HCT116 (cell line): ENCODE measurements at regions of chr2 and their contacts with region 1.

Region 1: GRCh38 chr2:169877398-169877797 is 50.1 kb downstream of the UBR3 start:
- DNase-seq: peak; percentile 10
- ATAC-seq: no peak
- H3K4me3 ChIP-seq: no peak overlapping the region
- H3K27ac ChIP-seq: no peak overlapping the region
- H3K4me1 ChIP-seq: no peaks in the 10 kb centered on the region
- H3K27me3 ChIP-seq: no peaks in the 10 kb centered on the region
- CTCF ChIP-seq: peak in 1 of 3 experiments; percentile 43; a peak in 2 of 6 replicates
- POLR2A ChIP-seq: no peak
- RAD21 ChIP-seq: peak; percentile 54

Region 2: DNA sequence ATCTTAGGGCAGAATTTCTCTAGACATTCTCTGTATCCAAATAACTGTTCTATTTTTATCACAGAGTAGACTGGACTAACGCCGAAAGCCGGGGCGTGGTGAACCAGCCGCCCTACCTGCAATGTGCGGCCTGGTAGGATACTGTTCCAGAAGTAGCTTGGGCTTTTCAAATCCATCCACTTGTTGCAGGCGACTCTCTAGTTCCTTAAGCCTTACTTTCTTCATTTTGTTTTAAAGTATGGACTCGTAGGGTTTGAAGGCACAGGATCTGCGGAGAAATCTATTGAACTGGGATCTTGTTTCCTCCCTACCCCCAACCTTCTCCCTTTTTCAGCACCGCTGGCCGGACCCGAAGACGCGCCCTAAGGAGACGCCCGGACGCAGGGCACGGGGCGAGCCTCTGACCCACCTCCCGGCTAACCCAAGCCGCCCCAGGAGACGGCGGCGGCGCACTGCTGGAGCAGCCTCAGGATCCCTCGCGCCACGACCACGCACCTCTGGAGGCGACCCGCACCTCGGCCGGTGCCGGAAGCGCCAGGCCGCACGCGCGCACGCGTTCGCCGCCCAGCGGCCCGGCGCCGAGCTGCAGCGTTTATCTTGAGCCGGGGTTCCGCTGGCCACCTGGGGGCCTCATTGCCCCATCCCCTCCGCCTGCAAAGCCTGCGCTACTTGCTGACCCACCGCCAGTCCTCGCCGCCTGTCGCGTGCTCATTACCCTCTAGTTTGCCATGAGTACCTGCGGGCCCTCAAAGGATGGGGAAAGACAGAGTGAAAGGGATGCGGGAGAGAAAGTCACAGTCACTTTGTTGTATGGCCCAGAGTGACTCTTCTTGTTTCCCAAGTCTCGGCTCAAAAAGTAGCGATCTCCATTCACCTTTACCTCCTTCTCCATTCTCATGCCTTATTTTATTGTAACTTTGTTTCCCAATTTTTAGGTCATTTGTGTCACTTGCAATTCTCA is 52.7 kb before region 1 on chr2 and contains the start of gene METTL5:
- CTCF ChIA-PET with region 1: interaction called, 12 read pairs
- POLR2A ChIA-PET with region 1: no interaction called
- RAD21 ChIA-PET with region 1: no interaction called
- intact Hi-C with region 1: loop called (anchors 1 kb)
- DNase-seq: peak; percentile 72
- ATAC-seq: peak; percentile 69
- H3K4me3 ChIP-seq: peak within 1 kb of the TSS; percentile 60 to 81
- H3K27ac ChIP-seq: peak within 1 kb of the TSS; percentile 88
- H3K4me1 ChIP-seq: peaks cover 22 to 41% of the 10 kb centered on the region in 2 experiments
- H3K27me3 ChIP-seq: no peaks in the 10 kb centered on the region
- CTCF ChIP-seq: peak; percentile 84 to 99 (median 90)
- POLR2A ChIP-seq: peak; percentile 89
- RAD21 ChIP-seq: peak; percentile 86
- total RNA-seq, gene METTL5: 103 TPM